CD8-positive, alpha-beta T cell (primary cell): ENCODE measurements at regions of chr2 and their contacts with region 1.

Region 1: GRCh38 chr2:26605195-26605998 is 35.8 kb downstream of the CIB4 start:
- DNase-seq: peak in 6 of 9 experiments; percentile 14 to 71 (median 42)
- ATAC-seq: no peak
- H3K4me3 ChIP-seq: no peak overlapping the region
- H3K4me3 Mint-ChIP-seq: no peak overlapping the region
- H3K27ac ChIP-seq: no peak overlapping the region
- H3K27ac Mint-ChIP-seq: no peak overlapping the region
- H3K4me1 ChIP-seq: peaks cover 23% of the 10 kb centered on the region
- H3K4me1 Mint-ChIP-seq: peaks cover 21% of the 10 kb centered on the region
- H3K27me3 ChIP-seq: no peaks in the 10 kb centered on the region
- H3K27me3 Mint-ChIP-seq: peaks cover 20% of the 10 kb centered on the region
- CTCF ChIP-seq: peak; percentile 70

Region 2: DNA sequence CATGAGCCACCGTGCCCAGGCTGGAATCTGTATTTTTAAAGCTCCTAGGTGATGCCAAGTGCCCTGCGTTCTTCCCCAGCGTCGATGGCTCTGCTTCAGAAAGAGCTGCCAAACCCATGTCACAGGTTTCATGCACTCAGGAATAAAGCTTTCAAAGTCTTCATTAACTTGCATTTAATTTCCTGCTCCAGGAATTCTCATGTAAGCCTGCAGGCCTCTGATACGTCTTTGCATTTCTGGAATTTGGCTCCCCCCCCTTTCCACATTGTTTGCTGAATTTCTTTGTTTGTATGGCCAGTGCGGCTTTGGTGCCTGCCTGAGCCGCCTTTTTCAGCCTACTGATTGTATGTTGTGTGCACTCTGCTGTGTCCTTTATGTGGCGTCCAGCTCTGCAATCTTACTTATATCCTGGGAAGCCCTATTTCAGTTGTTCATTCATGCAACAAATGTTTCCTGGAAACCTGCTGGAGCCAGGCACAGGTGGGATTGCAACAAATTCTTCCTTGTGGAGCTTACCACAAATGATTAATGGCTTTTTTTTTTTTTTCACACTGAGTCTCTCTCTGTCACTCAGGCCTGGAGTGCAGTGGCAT is 109.6 kb before region 1 on chr2:
- CTCF ChIA-PET with region 1: no interaction called
- POLR2A ChIA-PET with region 1: no interaction called
- intact Hi-C with region 1: no loop called
- DNase-seq: no peak
- ATAC-seq: no peak
- H3K4me3 ChIP-seq: no peak overlapping the region
- H3K4me3 Mint-ChIP-seq: no peak overlapping the region
- H3K27ac ChIP-seq: no peak overlapping the region
- H3K27ac Mint-ChIP-seq: no peak overlapping the region
- H3K4me1 ChIP-seq: no peaks in the 10 kb centered on the region
- H3K4me1 Mint-ChIP-seq: no peaks in the 10 kb centered on the region
- H3K27me3 ChIP-seq: no peaks in the 10 kb centered on the region
- H3K27me3 Mint-ChIP-seq: peaks cover 7% of the 10 kb centered on the region
- CTCF ChIP-seq: no peak

Region 3: GRCh38 chr2:26922405-26923188 is 317.2 kb after region 1 on chr2:
- CTCF ChIA-PET with region 1: no interaction called
- POLR2A ChIA-PET with region 1: no interaction called
- intact Hi-C with region 1: loop called in 1 of 2 experiments (anchors 2 kb)
- DNase-seq: peak in 8 of 9 experiments; percentile 13 to 61 (median 38)
- ATAC-seq: peak; percentile 67
- H3K4me3 ChIP-seq: no peak overlapping the region
- H3K4me3 Mint-ChIP-seq: no peak overlapping the region
- H3K27ac ChIP-seq: no peak overlapping the region
- H3K27ac Mint-ChIP-seq: no peak overlapping the region
- H3K4me1 ChIP-seq: no peaks in the 10 kb centered on the region
- H3K4me1 Mint-ChIP-seq: peaks cover 6% of the 10 kb centered on the region
- H3K27me3 ChIP-seq: no peaks in the 10 kb centered on the region
- H3K27me3 Mint-ChIP-seq: peaks cover 28% of the 10 kb centered on the region
- CTCF ChIP-seq: peak; percentile 68